CD8-positive, alpha-beta T cell (primary cell): ENCODE measurements at regions of chr5 and their contacts with region 1.

Region 1: DNA sequence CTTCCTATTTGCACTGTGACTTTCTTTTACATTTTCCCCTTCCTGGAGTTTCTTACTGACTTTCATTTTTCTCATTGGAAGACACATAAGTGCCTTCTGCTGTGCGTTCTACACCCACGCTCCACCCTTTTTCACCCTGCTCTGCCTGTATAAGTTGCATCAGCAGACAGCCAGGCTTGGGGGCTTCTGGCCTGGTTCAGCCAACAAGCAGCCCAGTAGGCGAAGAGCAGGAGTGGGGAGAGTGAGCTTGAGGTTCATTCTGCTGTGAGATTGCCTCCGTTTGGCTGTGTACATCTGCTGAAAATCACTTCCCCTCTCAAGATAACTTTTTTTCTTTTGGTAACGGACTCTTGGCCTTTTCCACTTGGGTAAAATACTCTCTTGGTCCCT is 38.4 kb downstream of the RASGRF2 start:
- DNase-seq: peak in 2 of 9 experiments; percentile 20 to 29
- ATAC-seq: peak; percentile 41
- H3K4me3 ChIP-seq: peak overlapping the region in 1 of 2 experiments; percentile 5
- H3K4me3 Mint-ChIP-seq: peak overlapping the region; percentile 73
- H3K27ac ChIP-seq: peak overlapping the region in 1 of 2 experiments; percentile 48
- H3K27ac Mint-ChIP-seq: peak overlapping the region; percentile 90
- H3K4me1 ChIP-seq: peaks cover 59% of the 10 kb centered on the region
- H3K4me1 Mint-ChIP-seq: peaks cover 77% of the 10 kb centered on the region
- H3K27me3 ChIP-seq: no peaks in the 10 kb centered on the region
- H3K27me3 Mint-ChIP-seq: no peaks in the 10 kb centered on the region
- CTCF ChIP-seq: no peak

Region 2: DNA sequence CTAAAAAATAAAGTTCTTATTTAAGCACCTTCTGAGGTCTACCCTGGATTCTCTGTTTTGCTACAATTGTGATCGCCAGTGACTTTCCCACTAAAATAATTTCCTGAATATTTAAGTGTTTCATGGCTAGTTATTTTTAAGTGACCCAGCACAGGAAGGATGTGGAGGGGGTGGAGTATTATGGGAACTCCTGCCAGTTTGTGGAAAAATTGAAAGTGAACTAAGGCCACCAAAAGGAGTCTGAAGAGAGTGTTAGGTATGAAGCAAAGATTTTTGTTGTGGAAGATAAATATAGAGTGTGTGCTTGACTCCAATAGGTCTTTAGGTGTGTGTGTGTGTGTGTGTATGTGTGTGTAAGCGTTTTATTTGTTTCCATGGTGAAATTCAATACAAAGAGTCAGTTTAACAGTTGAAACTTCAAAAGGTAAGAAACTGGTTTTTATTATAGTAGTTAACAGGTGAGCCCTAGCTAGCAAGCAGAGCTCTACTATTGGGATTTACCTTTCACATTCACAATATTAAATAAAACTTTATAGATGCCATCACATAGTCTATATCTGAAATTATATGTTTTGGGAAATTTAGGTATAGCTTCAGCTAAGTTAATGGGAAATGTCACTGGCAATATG is 12.9 kb before region 1 on chr5:
- CTCF ChIA-PET with region 1: interaction called, 4 read pairs
- POLR2A ChIA-PET with region 1: interaction called, 4 read pairs
- intact Hi-C with region 1: loop called in 1 of 2 experiments (anchors 2 kb)
- DNase-seq: no peak
- ATAC-seq: no peak
- H3K4me3 ChIP-seq: no peak overlapping the region
- H3K4me3 Mint-ChIP-seq: no peak overlapping the region
- H3K27ac ChIP-seq: no peak overlapping the region
- H3K27ac Mint-ChIP-seq: peak overlapping the region; percentile 8
- H3K4me1 ChIP-seq: peaks cover 44% of the 10 kb centered on the region
- H3K4me1 Mint-ChIP-seq: peaks cover 74% of the 10 kb centered on the region
- H3K27me3 ChIP-seq: no peaks in the 10 kb centered on the region
- H3K27me3 Mint-ChIP-seq: no peaks in the 10 kb centered on the region
- CTCF ChIP-seq: no peak

Region 3: GRCh38 chr5:81544351-81545018 is 545.9 kb after region 1 on chr5:
- CTCF ChIA-PET with region 1: no interaction called
- POLR2A ChIA-PET with region 1: no interaction called
- intact Hi-C with region 1: no loop called
- DNase-seq: no peak
- ATAC-seq: no peak
- H3K4me3 ChIP-seq: no peak overlapping the region
- H3K4me3 Mint-ChIP-seq: no peak overlapping the region
- H3K27ac ChIP-seq: no peak overlapping the region
- H3K27ac Mint-ChIP-seq: no peak overlapping the region
- H3K4me1 ChIP-seq: no peaks in the 10 kb centered on the region
- H3K4me1 Mint-ChIP-seq: peaks cover 4% of the 10 kb centered on the region
- H3K27me3 ChIP-seq: no peaks in the 10 kb centered on the region
- H3K27me3 Mint-ChIP-seq: no peaks in the 10 kb centered on the region
- CTCF ChIP-seq: no peak

Region 4: DNA sequence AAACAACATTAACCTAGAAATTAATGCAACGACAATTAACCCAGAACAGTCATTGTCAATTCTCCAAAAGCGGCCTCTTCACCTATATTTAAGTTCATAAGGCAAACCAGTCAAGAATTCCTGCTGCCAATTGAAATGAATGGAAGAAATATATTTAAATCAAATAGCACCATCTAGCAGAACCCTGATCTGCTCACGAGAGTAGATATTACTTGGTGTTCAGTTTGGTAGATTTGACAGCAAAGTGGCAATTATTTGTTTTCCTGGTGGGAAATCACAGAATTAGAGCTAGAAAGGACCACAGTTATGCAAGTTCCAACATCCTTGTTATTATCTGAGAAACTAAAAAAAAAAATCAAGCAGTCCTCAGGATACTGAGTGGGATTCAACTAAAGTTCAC is 750.0 kb after region 1 on chr5:
- CTCF ChIA-PET with region 1: no interaction called
- POLR2A ChIA-PET with region 1: no interaction called
- intact Hi-C with region 1: no loop called
- DNase-seq: no peak
- ATAC-seq: no peak
- H3K4me3 ChIP-seq: no peak overlapping the region
- H3K4me3 Mint-ChIP-seq: peak overlapping the region; percentile 97
- H3K27ac ChIP-seq: no peak overlapping the region
- H3K27ac Mint-ChIP-seq: peak overlapping the region; percentile 93
- H3K4me1 ChIP-seq: peaks cover 17% of the 10 kb centered on the region
- H3K4me1 Mint-ChIP-seq: peaks cover 39% of the 10 kb centered on the region
- H3K27me3 ChIP-seq: no peaks in the 10 kb centered on the region
- H3K27me3 Mint-ChIP-seq: no peaks in the 10 kb centered on the region
- CTCF ChIP-seq: no peak